ENCODE measurements at regions of chr18 and their contacts with region 1.

Region 1: GRCh38 chr18:30763902-30764350 is 278.6 kb downstream of the DSC3 start:
- DNase-seq: no peak
- ATAC-seq: no peak
- H3K4me3 ChIP-seq: no peak overlapping the region
- H3K27ac ChIP-seq: no peak overlapping the region
- H3K4me1 ChIP-seq: no peaks in the 10 kb centered on the region
- H3K27me3 ChIP-seq: no peaks in the 10 kb centered on the region
- CTCF ChIP-seq: no peak
- POLR2A ChIP-seq: no peak

Region 2: DNA sequence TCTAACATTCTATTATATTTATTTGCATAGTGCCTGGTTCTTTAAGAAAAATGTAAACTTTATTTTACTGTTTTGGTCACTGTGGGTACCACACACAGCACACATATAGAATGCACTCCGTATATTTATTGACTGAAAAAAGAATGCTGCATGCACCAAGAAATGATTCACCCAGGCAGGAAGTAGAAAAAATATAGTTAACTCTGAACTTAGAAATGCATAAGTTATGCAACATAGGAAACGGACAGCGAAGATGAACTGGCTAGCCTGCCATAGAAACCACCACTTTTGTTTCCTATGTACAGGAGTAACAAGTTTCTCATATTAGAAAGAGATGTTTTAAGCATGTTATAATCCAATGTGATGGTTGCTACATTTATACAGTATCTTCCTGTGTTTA is 357.2 kb before region 1 on chr18:
- in situ Hi-C with region 1: no loop called
- intact Hi-C with region 1: no loop called
- DNase-seq: no peak
- ATAC-seq: no peak
- H3K4me3 ChIP-seq: no peak overlapping the region
- H3K27ac ChIP-seq: no peak overlapping the region
- H3K4me1 ChIP-seq: no peaks in the 10 kb centered on the region
- H3K27me3 ChIP-seq: no peaks in the 10 kb centered on the region
- CTCF ChIP-seq: no peak
- POLR2A ChIP-seq: no peak

Region 3: GRCh38 chr18:30828700-30829099 is 64.8 kb after region 1 on chr18:
- in situ Hi-C with region 1: no loop called
- intact Hi-C with region 1: no loop called
- DNase-seq: no peak
- ATAC-seq: no peak
- H3K4me3 ChIP-seq: no peak overlapping the region
- H3K27ac ChIP-seq: no peak overlapping the region
- H3K4me1 ChIP-seq: no peaks in the 10 kb centered on the region
- H3K27me3 ChIP-seq: no peaks in the 10 kb centered on the region
- CTCF ChIP-seq: no peak
- POLR2A ChIP-seq: no peak

Region 4: DNA sequence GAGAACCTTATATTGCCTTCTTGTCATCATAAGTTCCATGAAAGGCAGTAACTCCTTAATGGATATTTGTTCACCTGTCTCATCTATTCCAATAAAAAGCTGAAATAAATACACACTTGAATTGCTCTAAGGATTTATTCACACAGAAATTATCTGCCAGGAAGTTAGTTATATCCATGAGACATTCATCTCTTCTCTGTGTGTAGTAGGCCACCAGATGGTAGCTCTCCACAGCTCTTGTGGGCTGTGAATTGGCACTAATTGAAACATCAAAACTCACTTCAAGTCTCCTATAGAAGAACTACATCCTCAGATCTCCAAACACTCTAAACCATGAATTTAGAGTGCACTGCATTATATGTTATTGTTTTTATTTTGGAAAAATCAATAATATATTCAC is 89.1 kb after region 1 on chr18:
- in situ Hi-C with region 1: loop called in 1 of 4 experiments (anchors 25 kb)
- intact Hi-C with region 1: no loop called
- DNase-seq: no peak
- ATAC-seq: no peak
- H3K4me3 ChIP-seq: no peak overlapping the region
- H3K27ac ChIP-seq: no peak overlapping the region
- H3K4me1 ChIP-seq: no peaks in the 10 kb centered on the region
- H3K27me3 ChIP-seq: no peaks in the 10 kb centered on the region
- CTCF ChIP-seq: no peak
- POLR2A ChIP-seq: no peak

Measured in gastrocnemius medialis (tissue), 4 donors.